IMR-90 (cell line): ENCODE measurements at regions of chr3 and their contacts with region 1.

Region 1: GRCh38 chr3:49703443-49703927 is 14.1 kb downstream of the RNF123 start:
- DNase-seq: peak; percentile 62
- ATAC-seq: peak; percentile 96
- H3K4me3 ChIP-seq: no peak overlapping the region
- H3K27ac ChIP-seq: no peak overlapping the region
- H3K4me1 ChIP-seq: no peaks in the 10 kb centered on the region
- H3K27me3 ChIP-seq: no peaks in the 10 kb centered on the region
- CTCF ChIP-seq: peak; percentile 88
- POLR2A ChIP-seq: no peak
- RAD21 ChIP-seq: peak; percentile 87

Region 2: GRCh38 chr3:49370585-49371290 is 332.7 kb before region 1 on chr3:
- CTCF ChIA-PET with region 1: no interaction called
- POLR2A ChIA-PET with region 1: no interaction called
- dilution Hi-C with region 1: no loop called
- in situ Hi-C with region 1: no loop called
- intact Hi-C with region 1: no loop called
- DNase-seq: no peak
- ATAC-seq: no peak
- H3K4me3 ChIP-seq: no peak overlapping the region
- H3K27ac ChIP-seq: no peak overlapping the region
- H3K4me1 ChIP-seq: no peaks in the 10 kb centered on the region
- H3K27me3 ChIP-seq: no peaks in the 10 kb centered on the region
- CTCF ChIP-seq: no peak
- POLR2A ChIP-seq: no peak
- RAD21 ChIP-seq: no peak

Region 3: GRCh38 chr3:49906004-49906743 is 202.7 kb after region 1 on chr3:
- CTCF ChIA-PET with region 1: no interaction called
- POLR2A ChIA-PET with region 1: no interaction called
- dilution Hi-C with region 1: no loop called
- in situ Hi-C with region 1: loop called (anchors 5 kb)
- intact Hi-C with region 1: loop called (anchors 1 kb)
- DNase-seq: peak; percentile 46
- ATAC-seq: peak; percentile 88
- H3K4me3 ChIP-seq: peak overlapping the region; percentile 45; the same call in 1 of the 2 replicates
- H3K27ac ChIP-seq: no peak overlapping the region
- H3K4me1 ChIP-seq: peaks cover 6% of the 10 kb centered on the region
- H3K27me3 ChIP-seq: no peaks in the 10 kb centered on the region
- CTCF ChIP-seq: peak; percentile 66
- POLR2A ChIP-seq: no peak
- RAD21 ChIP-seq: peak; percentile 73

Region 4: DNA sequence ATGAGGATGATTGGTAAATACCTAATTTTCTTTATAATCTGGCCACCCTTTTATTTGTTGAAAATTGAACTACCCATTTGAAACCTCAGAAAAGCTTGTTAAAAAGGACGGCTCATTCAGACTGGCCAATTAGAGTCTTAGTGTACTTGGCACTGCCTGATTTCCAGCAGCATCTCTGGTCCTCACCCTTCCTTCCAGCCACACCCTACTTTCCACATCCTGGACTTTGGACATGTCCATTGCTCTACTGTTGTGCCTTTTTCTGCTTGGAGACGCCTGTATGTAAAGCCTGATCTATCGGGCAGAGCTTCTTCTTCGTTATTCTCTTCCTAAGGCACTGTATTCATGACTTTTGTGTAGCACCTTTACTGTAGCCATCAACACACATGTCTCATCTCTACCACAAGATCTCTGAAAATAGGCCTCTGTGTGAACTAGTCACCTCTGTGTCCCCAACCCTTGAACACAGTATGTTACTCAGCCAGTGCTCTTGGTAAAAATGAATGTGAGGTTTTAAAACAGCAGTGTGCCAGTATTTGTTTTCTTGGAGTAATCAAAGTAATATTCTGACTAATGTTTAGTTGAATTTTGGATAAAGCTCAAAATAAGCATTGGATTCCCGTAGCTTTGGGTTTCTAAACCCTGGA is 392.0 kb after region 1 on chr3:
- CTCF ChIA-PET with region 1: no interaction called
- POLR2A ChIA-PET with region 1: no interaction called
- dilution Hi-C with region 1: no loop called
- in situ Hi-C with region 1: no loop called
- intact Hi-C with region 1: loop called (anchors 10 kb)
- DNase-seq: peak; percentile 46
- ATAC-seq: peak; percentile 36; the same call in 1 of the 2 replicates
- H3K4me3 ChIP-seq: no peak overlapping the region
- H3K27ac ChIP-seq: no peak overlapping the region
- H3K4me1 ChIP-seq: peaks cover 9% of the 10 kb centered on the region
- H3K27me3 ChIP-seq: no peaks in the 10 kb centered on the region
- CTCF ChIP-seq: no peak
- POLR2A ChIP-seq: no peak
- RAD21 ChIP-seq: no peak